ENCODE measurements at regions of chr4 and their contacts with region 1.

Region 1: GRCh38 chr4:95165926-95166524 is 382.7 kb downstream of the UNC5C start:
- DNase-seq: peak in 12 of 35 experiments; percentile 6 to 75 (median 14)
- ATAC-seq: peak; percentile 46 to 75 (median 69)
- H3K4me3 ChIP-seq: no peak overlapping the region
- H3K4me3 Mint-ChIP-seq: no peak overlapping the region
- H3K27ac ChIP-seq: no peak overlapping the region
- H3K27ac Mint-ChIP-seq: no peak overlapping the region
- H3K4me1 ChIP-seq: peaks cover 0 to 3% of the 10 kb centered on the region in 2 experiments
- H3K4me1 Mint-ChIP-seq: peaks cover 2 to 5% (median 2%) of the 10 kb centered on the region in 3 donors
- H3K27me3 ChIP-seq: no peaks in the 10 kb centered on the region
- H3K27me3 Mint-ChIP-seq: no peaks in the 10 kb centered on the region

Region 2: DNA sequence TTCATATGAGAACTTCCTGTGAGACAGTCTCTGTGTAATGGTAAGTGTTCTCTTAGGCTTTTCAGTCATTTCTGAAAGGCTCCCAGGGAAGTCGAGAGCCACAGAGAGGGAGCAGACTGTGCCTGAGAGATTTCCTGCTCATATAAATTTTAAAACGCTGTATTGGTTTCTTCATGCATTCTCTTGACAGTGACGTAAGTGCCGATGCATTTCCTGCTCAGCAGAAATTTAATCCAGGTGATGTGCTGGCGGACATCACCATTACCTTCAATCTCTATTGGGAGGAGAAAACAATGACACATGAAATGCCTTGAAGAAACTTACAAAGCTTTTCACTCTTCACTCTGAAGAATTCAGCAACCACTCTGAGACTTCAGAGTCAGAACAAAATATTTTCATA is 24.7 kb before region 1 on chr4:
- CTCF ChIA-PET with region 1: no interaction called
- POLR2A ChIA-PET with region 1: no interaction called
- DNase-seq: no peak
- ATAC-seq: peak in 1 of 4 experiments; percentile 49
- H3K4me3 ChIP-seq: no peak overlapping the region
- H3K4me3 Mint-ChIP-seq: no peak overlapping the region
- H3K27ac ChIP-seq: no peak overlapping the region
- H3K27ac Mint-ChIP-seq: no peak overlapping the region
- H3K4me1 ChIP-seq: peaks cover 0 to 2% of the 10 kb centered on the region in 2 experiments
- H3K4me1 Mint-ChIP-seq: no peaks in the 10 kb centered on the region
- H3K27me3 ChIP-seq: no peaks in the 10 kb centered on the region
- H3K27me3 Mint-ChIP-seq: peaks cover 4 to 20% of the 10 kb centered on the region in 2 donors

Region 3: GRCh38 chr4:95155759-95156451 is 10.1 kb before region 1 on chr4:
- CTCF ChIA-PET with region 1: interaction called, 4 to 7 read pairs
- POLR2A ChIA-PET with region 1: interaction called in 1 of 2 experiments, 11 read pairs
- DNase-seq: peak in 1 of 35 experiments; percentile 56
- ATAC-seq: peak; percentile 48 to 90 (median 57)
- H3K4me3 ChIP-seq: no peak overlapping the region
- H3K4me3 Mint-ChIP-seq: peak overlapping the region in 1 of 3 donors; percentile 45
- H3K27ac ChIP-seq: no peak overlapping the region
- H3K27ac Mint-ChIP-seq: peak overlapping the region; percentile 76 to 84
- H3K4me1 ChIP-seq: peaks cover 0 to 25% of the 10 kb centered on the region in 2 experiments
- H3K4me1 Mint-ChIP-seq: peaks cover 13 to 20% (median 17%) of the 10 kb centered on the region in 3 donors
- H3K27me3 ChIP-seq: peaks cover 0 to 6% of the 10 kb centered on the region in 2 experiments
- H3K27me3 Mint-ChIP-seq: no peaks in the 10 kb centered on the region

Region 4: GRCh38 chr4:96352051-96352517 is 1186.1 kb after region 1 on chr4:
- CTCF ChIA-PET with region 1: no interaction called
- POLR2A ChIA-PET with region 1: interaction called in 1 of 2 experiments, 11 read pairs
- DNase-seq: peak in 2 of 35 experiments; percentile 1
- ATAC-seq: no peak
- H3K4me3 ChIP-seq: no peak overlapping the region
- H3K4me3 Mint-ChIP-seq: no peak overlapping the region
- H3K27ac ChIP-seq: no peak overlapping the region
- H3K27ac Mint-ChIP-seq: no peak overlapping the region
- H3K4me1 ChIP-seq: no peaks in the 10 kb centered on the region
- H3K4me1 Mint-ChIP-seq: no peaks in the 10 kb centered on the region
- H3K27me3 ChIP-seq: no peaks in the 10 kb centered on the region
- H3K27me3 Mint-ChIP-seq: peaks cover 0 to 3% of the 10 kb centered on the region in 2 donors